K562 (cell line): ENCODE measurements at regions of chr1 and their contacts with region 1.

Region 1: DNA sequence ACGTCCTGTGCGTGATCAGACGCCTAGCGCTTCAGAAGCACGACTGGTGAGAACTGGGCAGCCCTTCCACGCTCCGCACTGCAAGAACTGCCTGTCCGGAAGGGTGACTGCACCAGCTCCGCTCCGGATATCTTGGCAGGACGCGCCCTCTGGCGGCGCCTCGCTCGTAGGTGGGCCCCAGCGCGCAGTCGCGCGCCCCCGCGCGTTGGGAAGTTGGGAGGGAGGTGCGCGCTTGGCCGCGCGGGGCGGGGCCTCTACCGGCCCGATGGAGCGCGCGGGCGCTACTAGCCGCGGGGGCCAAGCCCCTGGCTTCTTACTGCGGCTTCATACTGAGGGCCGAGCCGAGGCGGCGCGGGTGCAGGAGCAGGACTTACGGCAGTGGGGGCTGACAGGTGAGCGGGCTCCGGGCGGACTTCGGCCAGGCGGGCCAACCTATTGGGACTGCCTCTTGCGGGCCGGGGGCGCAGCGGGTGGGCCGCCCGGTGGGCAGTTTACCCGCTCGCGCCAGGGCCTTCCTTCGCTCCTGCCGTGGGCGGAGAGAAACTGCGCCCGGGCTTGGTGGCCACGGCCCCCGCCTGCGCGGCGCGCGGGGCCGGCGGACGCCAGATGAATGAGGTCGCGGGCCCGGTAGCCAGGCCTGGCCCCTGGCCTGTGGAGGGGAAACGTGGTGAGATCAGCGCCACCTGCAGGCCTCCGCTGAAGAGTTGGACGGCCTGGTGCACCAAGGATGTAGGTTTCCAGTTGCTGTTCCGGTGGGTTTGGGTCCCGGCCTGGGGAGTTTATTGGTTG is at the start of gene CHD1L:
- DNase-seq: peak; percentile 91 to 97 (median 92)
- ATAC-seq: peak; percentile 89
- H3K4me3 ChIP-seq: peak within 1 kb of the TSS; percentile 87
- H3K27ac ChIP-seq: peak within 1 kb of the TSS; percentile 93
- H3K4me1 ChIP-seq: peaks cover 8 to 28% of the 10 kb centered on the region in 2 experiments
- H3K27me3 ChIP-seq: no peaks in the 10 kb centered on the region
- CTCF ChIP-seq: peak; percentile 93 to 99 (median 99)
- EP300 ChIP-seq: peak; percentile 10; the same call in 1 of the 2 replicates
- POLR2A ChIP-seq: peak; percentile 92
- RAD21 ChIP-seq: peak; percentile 95 to 97
- polyA plus RNA-seq, gene CHD1L: 25.0 to 38.9 TPM

Region 2: GRCh38 chr1:147099192-147099591 is 143.4 kb before region 1 on chr1:
- CTCF ChIA-PET with region 1: no interaction called
- POLR2A ChIA-PET with region 1: no interaction called
- in situ Hi-C with region 1: no loop called
- intact Hi-C with region 1: loop called (anchors 5 kb)
- DNase-seq: peak in 1 of 4 experiments; percentile 17
- ATAC-seq: no peak
- H3K4me3 ChIP-seq: no peak overlapping the region
- H3K27ac ChIP-seq: no peak overlapping the region
- H3K4me1 ChIP-seq: peaks cover 0 to 6% of the 10 kb centered on the region in 2 experiments; a peak in 2 of 5 replicates
- H3K27me3 ChIP-seq: no peaks in the 10 kb centered on the region; a peak in 2 of 5 replicates
- CTCF ChIP-seq: no peak
- EP300 ChIP-seq: no peak
- POLR2A ChIP-seq: no peak
- RAD21 ChIP-seq: no peak

Region 3: DNA sequence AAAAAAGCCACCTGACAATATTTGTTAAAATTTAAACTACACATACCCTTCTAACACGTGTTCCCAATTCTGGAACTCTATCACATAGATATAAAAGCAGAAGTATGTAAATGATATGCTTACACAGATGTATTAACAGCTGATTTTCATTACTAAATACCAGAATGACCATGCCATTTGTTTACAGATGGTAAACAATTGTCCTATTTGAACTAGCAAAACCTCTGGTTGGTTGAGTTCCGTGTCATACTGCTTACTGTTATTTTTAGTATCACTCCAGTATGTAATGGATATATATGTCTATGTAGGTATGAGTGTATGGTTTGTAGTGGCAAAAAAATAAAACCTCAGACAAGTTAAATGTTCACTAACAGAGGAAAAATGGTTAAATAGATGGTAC is 70.6 kb after region 1 on chr1:
- CTCF ChIA-PET with region 1: no interaction called
- POLR2A ChIA-PET with region 1: no interaction called
- in situ Hi-C with region 1: no loop called
- intact Hi-C with region 1: no loop called
- DNase-seq: no peak
- ATAC-seq: no peak
- H3K4me3 ChIP-seq: no peak overlapping the region
- H3K27ac ChIP-seq: no peak overlapping the region
- H3K4me1 ChIP-seq: no peaks in the 10 kb centered on the region
- H3K27me3 ChIP-seq: no peaks in the 10 kb centered on the region
- CTCF ChIP-seq: no peak
- EP300 ChIP-seq: no peak
- POLR2A ChIP-seq: no peak
- RAD21 ChIP-seq: no peak